ENCODE measurements at regions of chr17 and their contacts with region 1.

Region 1: DNA sequence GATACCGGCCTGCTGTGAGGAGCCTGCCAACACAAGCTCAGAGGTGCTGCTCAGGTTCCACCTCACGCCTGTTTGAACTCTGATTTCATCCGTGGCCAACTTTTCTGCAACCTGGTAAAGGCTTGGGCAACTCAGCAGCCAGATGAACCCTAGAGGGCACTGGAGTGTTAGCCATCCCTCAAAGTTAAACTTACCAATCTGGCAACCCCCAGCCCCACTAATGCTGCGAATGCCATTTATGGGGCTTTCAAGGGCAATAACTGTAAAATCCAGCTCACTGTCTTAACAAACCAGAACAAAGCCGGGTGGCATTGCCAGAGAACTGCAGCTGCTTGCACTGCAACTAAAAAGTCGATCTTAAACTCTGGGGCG is 105.5 kb downstream of the AXIN2 start:
- DNase-seq: no peak
- ATAC-seq: peak; percentile 91

Region 2: GRCh38 chr17:65294179-65294720 is 161.7 kb before region 1 on chr17:
- intact Hi-C with region 1: no loop called
- DNase-seq: peak; percentile 58
- ATAC-seq: peak; percentile 95

Region 3: DNA sequence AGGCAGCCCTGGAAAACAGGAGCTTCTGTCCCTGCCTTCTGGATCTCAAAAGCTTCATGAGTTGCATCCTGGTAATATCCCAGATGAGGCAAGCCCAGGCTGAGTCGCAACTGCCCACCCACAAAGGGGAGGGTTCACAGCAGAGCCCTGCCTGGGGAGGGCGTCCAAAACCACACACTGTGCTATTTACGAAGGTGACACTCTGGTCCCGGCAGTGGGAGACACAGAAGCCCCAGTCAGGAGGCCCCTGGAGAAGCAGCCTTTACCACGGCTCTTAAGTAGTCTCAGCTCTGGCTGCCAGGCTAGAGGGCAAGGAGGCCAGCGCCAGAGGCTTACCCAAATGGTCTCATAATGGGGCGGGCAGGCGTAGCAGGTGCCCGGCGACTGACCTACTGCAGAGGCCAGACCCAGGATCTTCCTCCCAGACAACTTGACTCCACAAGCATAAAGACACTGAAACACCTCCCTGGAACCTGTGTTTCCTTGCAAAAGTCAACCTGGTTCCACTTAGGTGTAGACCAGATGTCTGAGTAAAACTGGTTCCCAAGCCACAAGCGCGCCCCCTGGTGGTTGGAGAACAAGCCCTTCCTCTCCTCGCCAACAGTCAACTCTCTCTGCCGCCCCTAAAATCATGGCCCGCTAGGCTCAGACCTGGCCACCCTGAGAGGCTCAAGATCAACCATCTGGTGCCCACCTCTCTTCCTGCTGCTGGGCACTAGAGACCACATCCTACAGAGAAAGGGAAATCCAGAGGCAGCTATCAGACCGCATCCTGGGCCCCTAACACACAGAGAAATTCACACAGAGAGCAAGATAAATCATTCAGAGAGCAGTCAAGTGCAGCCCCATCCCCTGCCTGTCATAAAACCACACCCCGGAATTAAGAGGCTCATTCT is 100.3 kb after region 1 on chr17:
- intact Hi-C with region 1: loop called (anchors 2 kb)
- DNase-seq: peak; percentile 85
- ATAC-seq: peak; percentile 25

Region 4: GRCh38 chr17:65677932-65678331 is 222.0 kb after region 1 on chr17:
- intact Hi-C with region 1: no loop called
- DNase-seq: no peak
- ATAC-seq: no peak

Measured in Right ventricle myocardium superior (tissue), 1 donor.